Stomach (tissue), 19 donors: ENCODE measurements at regions of chr13 and their contacts with region 1.

Region 1: GRCh38 chr13:40682449-40683240 is 16.2 kb upstream of the FOXO1 start:
- DNase-seq: peak in 1 of 2 donors; percentile 36
- H3K4me3 ChIP-seq: no peak overlapping the region
- H3K27ac ChIP-seq: no peak overlapping the region
- H3K4me1 ChIP-seq: peaks cover 0 to 21% (median 6%) of the 10 kb centered on the region in 4 donors
- H3K27me3 ChIP-seq: no peaks in the 10 kb centered on the region
- CTCF ChIP-seq: peak in 5 of 7 experiments; percentile 37 to 81 (median 42)
- EP300 ChIP-seq: no peak
- POLR2A ChIP-seq: no peak

Region 2: DNA sequence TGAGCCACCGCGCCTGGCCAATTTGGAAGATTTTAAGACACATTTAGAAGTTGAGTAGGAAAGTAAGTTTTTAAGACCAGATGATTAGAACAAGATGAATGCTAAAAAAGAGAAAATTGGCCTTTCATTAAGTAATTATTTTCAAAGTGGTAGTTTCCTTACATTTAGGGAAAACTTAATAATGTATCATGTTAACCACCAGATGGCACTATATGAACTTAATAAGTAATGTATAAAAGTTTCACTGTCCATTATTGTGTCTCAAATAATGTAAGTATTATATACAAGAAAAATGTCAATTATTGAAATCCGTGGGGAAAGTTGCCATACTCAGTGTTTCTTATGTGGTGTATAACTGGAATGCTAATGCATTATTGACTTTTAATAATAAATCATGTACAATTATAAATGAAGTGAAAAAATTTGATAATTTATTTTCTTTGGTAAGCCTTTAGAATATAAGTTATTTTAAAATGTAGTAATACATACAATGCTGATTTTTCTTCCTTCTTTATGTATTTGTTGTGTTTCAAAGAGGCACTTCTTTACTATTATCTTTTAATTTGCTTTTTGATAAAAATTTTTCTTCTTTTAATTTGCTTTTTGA is 998.0 kb before region 1 on chr13:
- intact Hi-C with region 1: loop called (anchors 10 kb)
- DNase-seq: peak in 1 of 2 donors; percentile 47
- H3K4me3 ChIP-seq: no peak overlapping the region
- H3K27ac ChIP-seq: no peak overlapping the region
- H3K4me1 ChIP-seq: peaks cover 0 to 5% (median 2%) of the 10 kb centered on the region in 4 donors
- H3K27me3 ChIP-seq: no peaks in the 10 kb centered on the region
- CTCF ChIP-seq: peak in 3 of 7 experiments; percentile 21 to 47 (median 35)
- EP300 ChIP-seq: no peak
- POLR2A ChIP-seq: no peak

Region 3: GRCh38 chr13:39942552-39943273 is 739.9 kb before region 1 on chr13:
- intact Hi-C with region 1: loop called (anchors 10 kb)
- DNase-seq: peak; percentile 79 to 84
- H3K4me3 ChIP-seq: no peak overlapping the region
- H3K27ac ChIP-seq: no peak overlapping the region
- H3K4me1 ChIP-seq: peaks cover 0 to 8% (median 1%) of the 10 kb centered on the region in 4 donors
- H3K27me3 ChIP-seq: peaks cover 0 to 5% (median 0%) of the 10 kb centered on the region in 3 donors
- CTCF ChIP-seq: peak in 5 of 7 experiments; percentile 73 to 90 (median 77)
- EP300 ChIP-seq: no peak
- POLR2A ChIP-seq: no peak

Region 4: GRCh38 chr13:40069173-40070044 is 613.2 kb before region 1 on chr13:
- intact Hi-C with region 1: loop called (anchors 5 kb)
- DNase-seq: peak; percentile 80 to 90
- H3K4me3 ChIP-seq: no peak overlapping the region
- H3K27ac ChIP-seq: peak overlapping the region in 1 of 5 donors; percentile 26
- H3K4me1 ChIP-seq: peaks cover 0 to 16% (median 9%) of the 10 kb centered on the region in 4 donors
- H3K27me3 ChIP-seq: no peaks in the 10 kb centered on the region
- CTCF ChIP-seq: peak in 5 of 7 experiments; percentile 72 to 88 (median 83)
- EP300 ChIP-seq: no peak
- POLR2A ChIP-seq: no peak